HCT116 (cell line): ENCODE measurements at regions of chr5 and their contacts with region 1.

Region 1: GRCh38 chr5:15003511-15003920 is 131.9 kb upstream of the ANKH start:
- DNase-seq: peak; percentile 46
- ATAC-seq: peak; percentile 92
- H3K4me3 ChIP-seq: no peak overlapping the region
- H3K27ac ChIP-seq: no peak overlapping the region
- H3K4me1 ChIP-seq: peaks cover 9 to 11% of the 10 kb centered on the region in 2 experiments; a peak in 3 of 4 replicates
- H3K27me3 ChIP-seq: 0 out of 2 replicates have a peak, but pooled peaks cover 5% of the 10 kb centered on the region
- CTCF ChIP-seq: peak; percentile 70 to 84 (median 81)
- POLR2A ChIP-seq: no peak
- RAD21 ChIP-seq: peak; percentile 87

Region 2: GRCh38 chr5:13987843-13988464 is 1015.6 kb before region 1 on chr5:
- CTCF ChIA-PET with region 1: no interaction called
- POLR2A ChIA-PET with region 1: no interaction called
- RAD21 ChIA-PET with region 1: no interaction called
- intact Hi-C with region 1: loop called (anchors 10 kb)
- DNase-seq: peak; percentile 42
- ATAC-seq: peak; percentile 64
- H3K4me3 ChIP-seq: no peak overlapping the region
- H3K27ac ChIP-seq: no peak overlapping the region
- H3K4me1 ChIP-seq: peaks cover 7 to 14% of the 10 kb centered on the region in 2 experiments
- H3K27me3 ChIP-seq: no peaks in the 10 kb centered on the region
- CTCF ChIP-seq: peak; percentile 72 to 92 (median 75)
- POLR2A ChIP-seq: no peak
- RAD21 ChIP-seq: peak; percentile 92

Region 3: GRCh38 chr5:14685757-14686156 is 317.8 kb before region 1 on chr5:
- CTCF ChIA-PET with region 1: interaction called, 26 read pairs
- POLR2A ChIA-PET with region 1: no interaction called
- RAD21 ChIA-PET with region 1: no interaction called
- intact Hi-C with region 1: no loop called
- DNase-seq: peak; percentile 23
- ATAC-seq: peak; percentile 84
- H3K4me3 ChIP-seq: no peak overlapping the region
- H3K27ac ChIP-seq: no peak overlapping the region
- H3K4me1 ChIP-seq: no peaks in the 10 kb centered on the region
- H3K27me3 ChIP-seq: no peaks in the 10 kb centered on the region
- CTCF ChIP-seq: peak; percentile 45 to 75 (median 59); a peak in 5 of 6 replicates
- POLR2A ChIP-seq: no peak
- RAD21 ChIP-seq: peak; percentile 67

Region 4: DNA sequence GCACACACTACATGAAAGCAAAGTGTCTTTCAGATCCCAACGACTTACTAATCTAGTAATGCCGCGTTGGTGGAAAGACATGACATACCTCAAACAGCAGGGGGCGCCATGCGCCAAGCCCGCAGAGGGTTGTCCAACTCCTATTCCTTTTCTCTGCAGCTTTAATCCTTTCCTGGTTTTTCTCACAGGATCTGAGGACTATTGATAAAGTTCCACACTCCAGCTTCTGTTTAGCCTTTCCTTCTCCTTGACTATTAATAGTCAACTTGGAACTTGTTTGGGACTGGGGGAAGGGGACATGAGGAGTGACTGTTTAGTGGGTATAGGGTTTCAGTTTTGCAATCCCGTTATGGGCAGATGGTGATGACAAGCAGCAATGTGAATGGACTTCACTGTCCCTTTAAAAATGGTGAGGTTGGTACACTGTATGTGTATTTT is 276.1 kb before region 1 on chr5:
- CTCF ChIA-PET with region 1: interaction called, 39 read pairs
- POLR2A ChIA-PET with region 1: interaction called, 3 read pairs
- RAD21 ChIA-PET with region 1: interaction called in 1 of 2 experiments, 3 read pairs
- intact Hi-C with region 1: loop called (anchors 1 kb)
- DNase-seq: peak; percentile 54
- ATAC-seq: peak; percentile 87
- H3K4me3 ChIP-seq: no peak overlapping the region
- H3K27ac ChIP-seq: no peak overlapping the region
- H3K4me1 ChIP-seq: peaks cover 0 to 10% of the 10 kb centered on the region in 2 experiments; a peak in 1 of 4 replicates
- H3K27me3 ChIP-seq: no peaks in the 10 kb centered on the region
- CTCF ChIP-seq: peak; percentile 85 to 97 (median 87)
- POLR2A ChIP-seq: no peak
- RAD21 ChIP-seq: peak; percentile 95

Region 5: DNA sequence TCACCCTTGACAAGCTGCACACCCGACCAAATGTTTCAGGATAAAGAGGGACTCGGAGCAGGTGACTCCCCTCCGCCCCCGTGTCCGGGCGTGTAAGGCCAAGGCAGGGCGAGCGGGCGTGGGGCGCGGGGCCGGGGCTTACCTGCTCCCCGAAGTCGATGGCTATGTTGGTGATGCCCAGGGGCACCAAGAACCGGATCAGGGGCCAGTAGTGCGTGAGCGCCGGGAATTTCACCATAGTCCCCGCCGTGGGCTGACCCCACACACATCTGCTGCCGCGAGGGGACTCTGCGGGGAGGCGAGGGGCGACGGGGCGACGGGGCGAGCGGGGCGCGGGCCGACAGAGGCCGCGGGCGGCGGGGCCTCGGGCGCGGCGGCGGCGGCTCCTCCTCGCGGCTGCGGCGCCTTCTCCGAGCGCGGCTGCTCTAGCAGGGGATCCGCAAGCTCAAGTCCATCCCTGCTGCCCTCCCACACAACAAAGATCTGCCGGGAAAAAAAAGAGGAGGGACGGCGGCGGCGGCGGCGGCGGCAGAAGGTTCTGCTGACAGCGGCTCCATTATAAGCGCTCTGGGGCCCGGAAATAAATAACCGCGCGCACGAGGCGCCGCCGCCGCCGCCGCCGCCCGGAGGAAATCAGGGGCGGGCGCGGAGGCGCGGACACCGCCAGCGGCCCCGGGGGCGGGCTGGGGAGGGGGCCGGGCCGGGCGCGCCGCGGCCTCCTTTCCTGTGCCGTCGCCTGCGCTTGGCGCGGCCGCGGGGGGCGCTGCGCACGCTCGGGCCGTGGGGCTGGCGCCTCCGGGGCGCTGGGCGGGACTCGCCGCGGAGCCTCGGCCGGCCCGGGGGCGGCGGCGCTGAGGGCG is 132.1 kb before region 1 on chr5 and contains the start of gene ANKH:
- CTCF ChIA-PET with region 1: interaction called, 3 read pairs
- POLR2A ChIA-PET with region 1: no interaction called
- RAD21 ChIA-PET with region 1: interaction called in 1 of 2 experiments, 7 read pairs
- intact Hi-C with region 1: loop called (anchors 5 kb)
- DNase-seq: peak; percentile 16
- ATAC-seq: peak; percentile 94
- H3K4me3 ChIP-seq: peak within 1 kb of the TSS; percentile 71 to 73
- H3K27ac ChIP-seq: peak within 1 kb of the TSS; percentile 47; the same call in 1 of the 2 replicates
- H3K4me1 ChIP-seq: peaks cover 3 to 15% of the 10 kb centered on the region in 2 experiments; a peak in 3 of 4 replicates
- H3K27me3 ChIP-seq: no peaks in the 10 kb centered on the region
- CTCF ChIP-seq: 0 out of 6 replicates have a peak, but pooled peaks of 1 of the 3 experiments have one; percentile 6
- POLR2A ChIP-seq: peak; percentile 49
- RAD21 ChIP-seq: no peak
- total RNA-seq, gene ANKH: 65.2 TPM

Region 6: GRCh38 chr5:14958196-14958595 is 45.3 kb before region 1 on chr5:
- CTCF ChIA-PET with region 1: interaction called, 14 read pairs
- POLR2A ChIA-PET with region 1: no interaction called
- RAD21 ChIA-PET with region 1: interaction called, 3 to 4 read pairs
- intact Hi-C with region 1: loop called (anchors 5 kb)
- DNase-seq: no peak
- ATAC-seq: no peak
- H3K4me3 ChIP-seq: no peak overlapping the region
- H3K27ac ChIP-seq: no peak overlapping the region
- H3K4me1 ChIP-seq: peaks cover 6 to 7% of the 10 kb centered on the region in 2 experiments; a peak in 3 of 4 replicates
- H3K27me3 ChIP-seq: no peaks in the 10 kb centered on the region
- CTCF ChIP-seq: no peak
- POLR2A ChIP-seq: no peak
- RAD21 ChIP-seq: no peak